Adrenal gland (tissue), 19 donors: ENCODE measurements at regions of chr1 and their contacts with region 1.

Region 1: DNA sequence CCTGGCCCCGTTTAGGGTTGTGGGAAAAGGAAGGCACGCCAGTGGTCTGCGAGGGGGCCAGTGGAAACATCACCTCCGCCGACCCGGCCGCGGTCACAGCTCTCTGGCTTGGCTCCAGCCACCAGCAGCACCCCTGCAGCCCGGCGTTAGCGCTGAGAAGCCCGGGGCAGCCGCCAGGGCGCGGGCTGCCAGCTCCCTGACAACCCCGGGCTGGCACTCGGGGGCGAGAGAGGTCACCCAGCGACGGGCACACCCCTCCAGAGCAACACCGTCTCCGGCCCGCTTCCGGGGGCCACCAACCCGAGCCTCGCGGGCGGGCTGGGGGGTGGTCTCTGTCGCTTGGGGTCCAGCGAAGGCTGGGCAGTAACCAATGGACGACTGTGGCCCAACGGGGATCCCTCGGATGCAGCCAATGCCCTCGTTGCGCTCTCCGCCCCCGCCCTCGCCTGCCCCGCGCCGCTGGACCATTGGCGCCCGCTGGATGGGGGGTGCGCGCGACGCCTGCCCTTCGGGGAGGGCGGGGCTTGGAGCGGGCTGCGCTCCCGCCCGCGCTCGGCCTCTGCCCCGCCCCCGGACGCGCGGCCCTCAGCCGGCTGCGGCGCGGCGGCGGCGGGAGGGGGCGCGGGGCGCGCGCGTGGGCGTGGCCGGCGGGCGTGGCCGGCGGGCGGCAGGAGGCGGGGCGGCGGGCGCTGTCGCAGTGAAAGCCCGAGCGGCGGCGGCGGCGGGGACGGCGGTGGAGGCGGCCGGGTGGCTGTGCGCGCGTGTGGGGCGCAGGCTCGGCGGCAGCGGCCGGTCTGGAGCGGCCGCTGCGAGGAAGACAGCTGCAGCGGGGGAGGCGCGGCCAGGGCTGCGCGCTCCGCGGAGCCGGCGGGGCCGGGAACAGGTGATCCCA is at the start of gene MAN1C1:
- DNase-seq: peak; percentile 86 to 94 (median 91)
- H3K4me3 ChIP-seq: peak within 1 kb of the TSS; percentile 58 to 99 (median 73)
- H3K27ac ChIP-seq: peak within 1 kb of the TSS in 4 of 5 donors; percentile 44 to 86 (median 70)
- H3K4me1 ChIP-seq: peaks cover 6 to 42% of the 10 kb centered on the region in 2 donors
- H3K27me3 ChIP-seq: no peaks in the 10 kb centered on the region
- CTCF ChIP-seq: peak; percentile 33 to 79 (median 64)
- POLR2A ChIP-seq: peak; percentile 23 to 54
- total RNA-seq, gene MAN1C1: 2.7 to 58.7 (median 30.0) TPM

Region 2: GRCh38 chr1:25695090-25695770 is 78.9 kb after region 1 on chr1:
- intact Hi-C with region 1: loop called in 1 of 2 experiments (anchors 5 kb)
- DNase-seq: peak; percentile 61 to 95 (median 92)
- H3K4me3 ChIP-seq: no peak overlapping the region
- H3K27ac ChIP-seq: peak overlapping the region; percentile 78 to 96 (median 95)
- H3K4me1 ChIP-seq: peaks cover 33 to 69% of the 10 kb centered on the region in 2 donors
- H3K27me3 ChIP-seq: no peaks in the 10 kb centered on the region
- CTCF ChIP-seq: peak in 2 of 6 experiments; percentile 21 to 29
- POLR2A ChIP-seq: peak in 1 of 2 donors; percentile 71

Region 3: DNA sequence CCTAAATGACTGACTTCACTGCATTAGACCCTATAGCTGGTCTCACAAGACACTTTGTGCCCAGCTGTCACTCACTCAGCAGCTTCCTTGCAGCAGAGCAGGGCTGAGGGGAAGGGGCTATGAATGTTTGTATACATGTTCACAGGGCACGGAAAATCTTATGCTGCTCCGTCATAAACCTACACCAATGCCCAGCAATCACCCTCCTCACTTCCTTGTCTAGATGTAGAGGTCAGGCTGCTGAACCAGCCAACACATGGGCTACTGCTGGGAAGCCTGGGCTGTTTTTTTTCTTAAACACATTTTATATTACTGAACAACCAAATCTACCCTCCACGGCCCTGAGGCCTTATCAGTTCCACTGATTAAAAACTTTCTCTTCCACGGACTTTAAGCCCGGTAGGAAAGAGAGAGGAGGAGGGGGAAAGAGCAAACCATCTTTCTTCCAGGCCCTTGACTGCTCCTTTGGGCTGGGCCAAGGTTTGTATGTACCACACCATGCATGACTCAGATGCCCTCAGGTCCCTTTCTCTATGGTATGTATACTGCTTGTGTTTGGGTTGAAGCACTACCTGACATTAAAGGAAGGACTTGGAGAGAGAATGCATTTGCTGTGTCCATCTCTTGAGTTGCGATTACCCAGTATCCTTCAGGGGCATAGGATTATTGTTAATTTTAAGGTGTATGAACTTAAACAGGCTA is 216.1 kb after region 1 on chr1:
- intact Hi-C with region 1: no loop called
- DNase-seq: peak in 3 of 7 donors; percentile 21 to 61 (median 60)
- H3K4me3 ChIP-seq: no peak overlapping the region
- H3K27ac ChIP-seq: peak overlapping the region in 3 of 5 donors; percentile 47 to 85 (median 85)
- H3K4me1 ChIP-seq: peaks cover 62 to 87% of the 10 kb centered on the region in 2 donors
- H3K27me3 ChIP-seq: no peaks in the 10 kb centered on the region
- CTCF ChIP-seq: no peak
- POLR2A ChIP-seq: no peak